ENCODE measurements at regions of chr2 and their contacts with region 1.

Region 1: GRCh38 chr2:3585261-3586109 is 9.4 kb upstream of the COLEC11 start:
- DNase-seq: no peak

Region 2: GRCh38 chr2:3628800-3629199 is 43.3 kb after region 1 on chr2:
- intact Hi-C with region 1: no loop called
- DNase-seq: peak; percentile 41

Region 3: GRCh38 chr2:3651691-3652648 is 66.5 kb after region 1 on chr2:
- intact Hi-C with region 1: loop called (anchors 1 kb)
- DNase-seq: no peak

Region 4: GRCh38 chr2:3703753-3704355 is 118.4 kb after region 1 on chr2:
- intact Hi-C with region 1: no loop called
- DNase-seq: no peak